CD4-positive, alpha-beta memory T cell (primary cell): ENCODE measurements at regions of chr17 and their contacts with region 1.

Region 1: DNA sequence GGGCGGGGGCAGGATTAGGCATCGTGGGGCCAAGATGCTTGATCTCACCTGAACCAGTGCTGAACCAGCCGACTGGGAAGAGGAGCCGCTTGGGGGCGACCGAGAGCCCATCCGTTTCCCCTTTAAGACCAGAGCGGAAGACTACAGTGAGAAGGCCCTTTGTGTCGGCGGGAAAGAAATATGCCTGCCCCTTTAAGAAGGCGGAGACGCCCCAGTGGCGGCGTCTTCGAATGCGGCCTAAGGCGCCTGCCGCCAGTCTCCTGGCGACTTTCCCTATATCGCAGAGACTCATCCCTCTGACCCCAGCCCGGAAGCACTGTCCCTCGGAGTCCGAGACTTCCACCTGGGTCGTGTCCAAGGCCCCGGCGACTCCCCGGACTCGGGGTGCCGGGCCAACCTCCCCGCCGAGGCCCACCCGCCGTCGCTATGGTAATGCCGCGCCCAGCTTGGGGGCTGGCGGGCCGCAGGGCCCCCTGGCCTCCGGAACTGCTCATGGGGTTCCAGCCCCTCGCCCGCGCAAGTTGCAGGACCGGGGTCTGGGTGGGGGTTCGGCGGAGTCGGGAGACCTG is at the start of gene HROB:
- DNase-seq: peak; percentile 96 to 99 (median 97)
- H3K4me3 ChIP-seq: peak within 1 kb of the TSS; percentile 66 to 69
- H3K4me3 Mint-ChIP-seq: peak within 1 kb of the TSS; percentile 77 to 94 (median 84)
- H3K27ac ChIP-seq: peak within 1 kb of the TSS; percentile 79
- H3K27ac Mint-ChIP-seq: peak within 1 kb of the TSS; percentile 88 to 95 (median 90)
- H3K4me1 ChIP-seq: peaks cover 14% of the 10 kb centered on the region
- H3K4me1 Mint-ChIP-seq: peaks cover 2 to 19% (median 10%) of the 10 kb centered on the region in 4 donors
- H3K27me3 ChIP-seq: no peaks in the 10 kb centered on the region
- H3K27me3 Mint-ChIP-seq: peaks cover 7% of the 10 kb centered on the region in 2 donors
- total RNA-seq, gene HROB: 0.36 to 0.64 TPM

Region 2: DNA sequence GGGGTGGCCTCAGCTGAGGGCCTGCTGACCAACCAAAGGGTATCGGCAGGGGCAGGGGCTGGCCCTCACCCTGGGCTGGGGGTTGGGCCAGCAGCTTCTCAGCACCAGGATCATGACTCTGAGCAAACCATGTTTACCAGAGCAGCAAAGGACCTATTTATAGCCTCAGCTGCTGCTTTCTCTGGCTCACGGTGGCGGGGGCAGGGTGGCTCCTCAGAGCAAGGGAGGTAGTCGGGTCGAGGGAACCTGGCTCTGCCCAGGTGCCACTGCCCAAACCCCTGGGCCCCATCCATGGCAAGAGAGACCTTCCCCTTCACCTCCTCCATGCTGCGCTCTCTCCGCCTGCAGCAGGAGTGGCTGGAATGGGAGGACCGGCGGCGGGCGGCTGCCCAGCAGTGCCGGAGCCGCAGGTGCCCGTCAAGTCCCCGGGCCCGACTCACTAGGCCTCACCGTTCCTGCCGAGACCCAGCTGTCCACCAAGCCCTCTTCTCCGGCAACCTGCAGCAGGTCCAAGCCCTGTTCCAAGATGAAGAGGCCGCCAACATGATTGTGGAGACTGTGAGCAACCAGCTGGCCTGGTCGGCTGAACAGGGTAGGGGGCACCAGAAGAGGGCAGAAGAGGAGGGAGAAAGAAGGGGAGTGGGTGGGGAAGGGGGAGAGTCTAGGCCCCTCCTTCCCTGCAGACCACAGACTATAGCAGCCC is 28.8 kb after region 1 on chr17 and contains the start of gene ASB16:
- CTCF ChIA-PET with region 1: interaction called, 4 read pairs
- POLR2A ChIA-PET with region 1: interaction called, 3 read pairs
- intact Hi-C with region 1: loop called (anchors 1 kb)
- DNase-seq: no peak
- H3K4me3 ChIP-seq: no peak within 1 kb of the TSS
- H3K4me3 Mint-ChIP-seq: no peak within 1 kb of the TSS
- H3K27ac ChIP-seq: no peak within 1 kb of the TSS
- H3K27ac Mint-ChIP-seq: peak within 1 kb of the TSS in 2 of 7 donors; percentile 63 to 89
- H3K4me1 ChIP-seq: peaks cover 6% of the 10 kb centered on the region
- H3K4me1 Mint-ChIP-seq: peaks cover 5 to 16% (median 9%) of the 10 kb centered on the region in 4 donors
- H3K27me3 ChIP-seq: no peaks in the 10 kb centered on the region
- H3K27me3 Mint-ChIP-seq: no peaks in the 10 kb centered on the region
- total RNA-seq, gene ASB16: not detected